Dorsolateral prefrontal cortex (tissue), 120 donors: ENCODE measurements at regions of chr12 and their contacts with region 1.

Region 1: DNA sequence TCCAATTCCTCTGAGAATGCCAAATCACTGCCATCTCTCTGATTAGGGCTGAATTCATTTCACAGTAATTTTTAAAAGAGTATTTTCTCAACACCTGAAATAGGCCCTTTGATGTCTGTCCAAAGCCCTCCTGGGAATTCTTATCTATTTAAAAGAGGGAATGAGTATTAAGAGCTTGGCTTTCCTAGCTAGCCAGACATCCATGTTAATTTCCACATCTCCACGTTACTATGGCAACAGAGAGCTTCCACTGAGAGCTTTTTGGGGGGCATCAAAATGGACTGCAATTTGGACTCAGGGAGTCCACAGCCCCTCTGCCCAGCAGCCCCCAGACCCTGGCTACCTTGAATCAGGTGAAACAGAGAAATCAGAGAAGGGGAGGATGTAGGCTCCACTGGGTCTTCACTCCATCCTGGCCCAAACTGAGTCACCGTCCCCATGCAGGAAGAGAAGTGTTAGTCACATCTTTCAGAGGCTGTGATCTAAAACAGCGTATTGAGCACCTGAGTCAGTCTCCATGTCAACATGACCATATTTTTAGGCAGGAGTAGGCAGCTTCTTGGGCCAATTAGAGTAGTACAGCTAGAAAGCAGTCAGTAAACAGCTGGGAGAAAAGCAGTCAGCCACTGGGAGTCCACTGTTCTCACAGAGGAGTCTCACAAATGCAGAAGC is 7.0 kb upstream of the FICD start:
- DNase-seq: peak in 3 of 10 donors; percentile 34 to 64 (median 52)
- H3K4me3 ChIP-seq: no peak overlapping the region
- H3K27ac ChIP-seq: peak overlapping the region in 55 of 59 donors; percentile 5 to 88 (median 62)
- H3K27me3 ChIP-seq: peaks cover 0 to 5% (median 0%) of the 10 kb centered on the region in 45 donors
- CTCF ChIP-seq: no peak

Region 2: DNA sequence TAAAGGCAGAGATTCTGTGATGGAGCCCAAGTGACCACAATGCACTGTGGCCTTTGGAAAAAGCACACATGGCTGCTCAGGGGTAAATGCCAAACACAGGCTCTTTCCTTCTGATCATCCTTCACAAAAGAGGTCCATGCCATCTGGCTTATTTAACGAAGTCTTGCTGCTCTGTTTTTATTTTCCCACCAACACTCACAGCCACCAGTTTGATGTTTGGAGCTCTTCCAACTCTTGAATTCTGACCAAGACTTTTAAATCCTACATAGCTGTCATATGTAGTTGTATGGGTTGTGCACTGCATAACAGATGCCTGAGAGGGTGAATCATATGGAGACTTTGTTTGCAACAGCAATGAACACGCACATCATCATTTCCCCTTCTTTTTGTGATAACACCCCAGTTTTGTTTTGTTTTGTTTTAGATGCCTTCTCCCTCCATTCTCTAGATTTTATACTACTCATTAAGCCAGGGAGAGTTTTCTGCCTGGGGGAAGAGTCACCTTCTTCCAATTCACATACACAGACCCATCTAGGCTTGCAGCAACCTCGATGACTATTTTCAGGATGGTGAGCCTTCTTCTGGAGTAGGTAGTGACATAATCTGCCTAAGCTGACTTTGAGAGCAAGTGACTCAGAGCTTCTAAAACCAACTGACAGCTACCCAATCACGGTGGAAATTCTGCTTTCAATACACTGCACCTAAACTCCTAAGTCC is 524.2 kb before region 1 on chr12:
- intact Hi-C with region 1: loop called (anchors 10 kb)
- DNase-seq: no peak
- H3K4me3 ChIP-seq: no peak overlapping the region
- H3K27ac ChIP-seq: peak overlapping the region in 5 of 59 donors; percentile 22 to 69 (median 24)
- H3K27me3 ChIP-seq: peaks cover 0 to 28% (median 0%) of the 10 kb centered on the region in 45 donors
- CTCF ChIP-seq: no peak

Region 3: DNA sequence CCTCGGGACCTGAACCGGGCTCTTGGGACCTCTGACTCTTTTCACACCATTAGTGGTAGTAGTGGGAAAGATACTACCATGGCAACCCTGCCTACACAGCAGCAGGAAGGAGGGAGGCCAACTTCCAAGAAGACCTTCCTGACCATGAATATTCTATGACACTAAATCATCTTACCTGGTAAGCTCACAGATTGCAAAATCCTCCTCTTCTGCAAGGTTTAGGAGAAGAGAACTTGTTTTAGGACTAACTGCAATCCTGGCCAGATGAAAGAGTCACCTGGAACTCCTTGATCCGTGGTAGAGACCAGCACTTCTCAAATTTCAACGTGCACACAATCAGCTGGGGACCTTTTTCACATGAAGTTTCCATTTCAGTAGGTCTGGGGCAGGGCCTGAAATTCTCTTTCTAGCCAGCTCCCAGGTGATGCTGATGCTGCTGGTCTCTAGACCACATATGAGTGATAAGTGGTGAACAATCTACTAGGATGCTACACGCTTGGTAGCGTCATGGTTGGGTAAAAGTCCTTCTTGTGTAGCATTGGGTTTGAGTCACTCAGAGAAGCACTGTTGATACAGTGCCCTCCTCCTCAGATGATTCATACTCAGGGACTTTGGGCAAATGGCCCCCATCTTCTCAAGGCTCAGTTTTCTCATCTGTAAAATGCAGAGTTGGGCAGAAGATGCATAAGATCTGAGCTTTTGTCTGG is 28.6 kb before region 1 on chr12:
- intact Hi-C with region 1: no loop called
- DNase-seq: no peak
- H3K4me3 ChIP-seq: no peak overlapping the region
- H3K27ac ChIP-seq: no peak overlapping the region
- H3K27me3 ChIP-seq: peaks cover 0 to 8% (median 0%) of the 10 kb centered on the region in 45 donors
- CTCF ChIP-seq: no peak

Region 4: DNA sequence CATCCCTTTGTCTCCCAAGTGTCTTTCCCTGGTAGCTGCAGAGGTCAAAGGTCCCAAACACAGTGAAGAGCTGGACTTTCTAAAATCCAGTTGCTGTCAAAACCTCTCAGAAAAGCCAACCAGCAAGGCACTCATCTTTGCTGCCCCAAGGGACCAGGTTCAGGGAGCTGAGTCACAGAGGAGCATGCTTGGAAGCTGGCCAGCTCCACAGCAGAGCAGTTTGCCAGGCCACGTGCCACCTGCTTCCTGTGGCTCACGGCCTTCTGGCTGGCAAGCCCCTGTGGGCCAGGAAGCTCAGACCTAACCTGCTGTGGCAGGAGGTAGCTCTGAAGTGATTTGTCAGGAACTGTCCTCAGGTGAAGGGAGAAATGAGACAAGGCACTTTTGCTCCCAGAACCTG is 57.9 kb after region 1 on chr12:
- intact Hi-C with region 1: no loop called
- DNase-seq: peak in 5 of 10 donors; percentile 20 to 74 (median 46)
- H3K4me3 ChIP-seq: no peak overlapping the region
- H3K27ac ChIP-seq: peak overlapping the region in 35 of 59 donors; percentile 2 to 71 (median 41)
- H3K27me3 ChIP-seq: no peaks in the 10 kb centered on the region
- CTCF ChIP-seq: no peak